Left colon (tissue), 2 donors: ENCODE measurements at regions of chr20 and their contacts with region 1.

Region 1: GRCh38 chr20:8853805-8854338 is 215.0 kb upstream of the PLCB4 start:
- DNase-seq: no peak
- ATAC-seq: peak; percentile 95

Region 2: DNA sequence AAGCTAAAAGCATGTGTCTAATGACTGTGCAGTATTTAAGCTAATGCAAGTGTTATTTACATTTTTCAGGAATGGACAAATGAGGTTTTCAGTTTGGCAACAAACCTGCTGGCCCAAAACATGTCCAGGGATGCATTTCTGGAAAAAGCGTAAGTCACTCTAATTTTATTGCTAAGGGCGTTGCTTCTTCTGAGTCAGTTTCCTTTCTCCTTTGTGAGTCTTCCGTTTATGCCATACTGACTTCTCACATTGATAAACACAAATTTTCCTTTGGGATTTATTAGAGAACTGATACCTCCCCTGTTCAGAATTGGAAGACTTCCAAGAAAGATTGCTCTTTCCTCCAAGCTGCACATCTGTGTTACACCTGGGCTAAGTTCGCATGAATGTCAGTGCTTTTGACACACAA is 207.8 kb before region 1 on chr20:
- intact Hi-C with region 1: no loop called
- DNase-seq: no peak
- ATAC-seq: no peak

Region 3: GRCh38 chr20:8664778-8665177 is 189.1 kb before region 1 on chr20:
- intact Hi-C with region 1: no loop called
- DNase-seq: no peak
- ATAC-seq: no peak

Region 4: DNA sequence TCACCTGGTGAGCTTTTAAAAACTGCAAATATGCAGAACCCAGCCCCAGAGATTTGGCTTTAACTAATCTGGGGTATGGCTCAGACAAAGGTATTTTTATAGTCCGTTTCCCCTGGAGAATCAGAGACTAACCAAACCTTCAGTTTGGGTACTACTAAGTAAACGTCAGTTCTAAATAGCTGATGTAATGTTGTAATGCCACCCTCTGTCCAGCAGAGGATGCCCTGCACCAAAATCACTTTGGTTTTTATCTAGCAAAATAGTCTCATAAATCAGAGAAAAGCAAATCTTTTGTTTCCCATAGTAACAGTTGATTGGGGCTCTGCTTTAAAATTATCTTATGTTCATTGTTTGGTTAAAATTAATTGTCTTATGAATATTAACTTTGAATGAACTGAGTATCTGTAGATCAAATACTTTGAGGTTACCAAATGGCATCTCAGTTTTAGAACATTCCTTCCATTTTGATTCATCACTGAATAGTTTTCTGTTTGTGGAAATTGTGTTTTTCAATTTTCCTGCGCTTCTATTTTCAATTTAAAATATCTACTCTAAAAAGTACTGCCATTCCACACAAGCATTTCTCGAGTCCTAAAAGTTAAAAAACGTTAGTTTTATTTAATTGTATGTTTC is 63.3 kb before region 1 on chr20:
- intact Hi-C with region 1: loop called in 1 of 2 experiments (anchors 10 kb)
- DNase-seq: peak in 1 of 2 donors; percentile 35
- ATAC-seq: no peak

Region 5: GRCh38 chr20:9071976-9072726 is 218.3 kb after region 1 on chr20:
- intact Hi-C with region 1: loop called in 1 of 2 experiments (anchors 10 kb)
- DNase-seq: no peak
- ATAC-seq: no peak

Region 6: GRCh38 chr20:9156529-9157280 is 302.8 kb after region 1 on chr20:
- intact Hi-C with region 1: no loop called
- DNase-seq: no peak
- ATAC-seq: no peak

Region 7: DNA sequence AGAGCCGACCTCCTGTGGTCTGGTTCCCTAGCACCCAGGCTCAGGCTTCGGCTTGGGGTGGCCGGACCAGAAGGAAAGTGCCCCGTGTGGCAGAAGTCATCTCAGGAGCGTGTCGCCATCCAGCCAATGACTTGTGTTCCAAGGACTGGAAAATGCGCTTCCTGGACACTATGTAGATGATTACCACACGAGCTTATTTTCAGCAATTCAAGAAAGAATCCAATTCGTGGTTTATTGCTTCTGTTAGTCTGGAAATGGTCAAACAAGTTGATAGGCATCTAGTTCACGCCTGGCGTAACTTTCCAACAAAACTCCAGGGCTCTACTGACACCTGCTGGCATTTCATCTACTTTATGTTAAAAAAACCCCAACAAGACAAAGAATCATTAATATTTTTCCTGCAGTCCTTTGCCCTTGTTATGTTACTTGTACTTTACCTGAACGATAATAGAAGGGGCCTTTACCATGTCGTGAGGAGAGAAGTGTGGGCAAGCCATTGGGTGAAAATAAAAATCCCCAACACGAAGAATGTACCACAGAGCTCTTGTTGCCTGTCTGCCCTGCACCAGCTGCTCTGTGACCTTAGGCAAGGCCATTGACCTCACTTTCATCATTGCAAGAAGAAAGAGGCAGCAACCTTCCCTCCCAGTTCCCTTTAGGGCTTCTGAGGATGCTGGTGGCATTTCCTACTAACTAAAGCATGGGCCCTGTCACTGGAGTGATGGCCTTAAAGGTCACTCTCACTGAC is 505.9 kb after region 1 on chr20:
- intact Hi-C with region 1: loop called in 1 of 2 experiments (anchors 10 kb)
- DNase-seq: peak; percentile 43 to 52
- ATAC-seq: peak; percentile 87